ENCODE measurements at regions of chr6 and their contacts with region 1.

Region 1: DNA sequence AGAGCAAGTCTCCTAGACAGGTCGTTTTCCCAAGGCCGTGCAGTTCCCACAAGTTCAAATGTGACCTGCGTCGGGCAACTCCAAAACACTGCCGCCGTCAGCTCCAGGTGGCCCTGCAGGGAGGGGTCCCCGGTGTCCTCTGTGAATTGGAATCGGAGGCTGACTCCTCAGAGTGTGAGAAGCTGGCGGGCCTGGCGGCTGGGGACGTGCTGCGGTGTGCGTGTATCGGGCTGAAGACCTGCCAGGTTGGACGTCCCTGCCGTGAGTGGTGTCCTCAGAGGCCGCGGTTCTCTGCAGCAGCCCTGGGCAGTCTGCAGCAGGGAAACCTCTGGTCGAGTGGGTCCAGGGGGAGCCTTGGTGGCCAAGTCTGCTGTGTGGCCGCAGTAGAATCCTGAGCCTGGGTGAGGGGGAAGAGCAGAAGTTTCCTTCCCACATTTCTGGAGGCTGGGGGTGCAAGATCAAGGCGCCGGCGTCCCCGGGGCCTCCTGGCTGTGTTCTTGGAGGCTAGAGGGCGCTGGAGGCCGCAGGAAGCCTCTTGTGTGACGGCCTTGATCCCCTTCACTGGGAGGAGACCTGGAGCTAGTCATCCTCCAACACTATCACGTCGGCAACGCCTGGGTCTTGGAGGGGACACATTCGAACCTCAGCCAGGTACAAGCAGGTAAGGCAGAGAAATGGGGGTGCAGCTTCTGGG is 115.2 kb upstream of the FRMD1 start:
- DNase-seq: no peak
- H3K4me3 ChIP-seq: no peak overlapping the region
- H3K27ac ChIP-seq: no peak overlapping the region
- H3K4me1 ChIP-seq: no peaks in the 10 kb centered on the region
- H3K27me3 ChIP-seq: no peaks in the 10 kb centered on the region
- CTCF ChIP-seq: no peak

Region 2: DNA sequence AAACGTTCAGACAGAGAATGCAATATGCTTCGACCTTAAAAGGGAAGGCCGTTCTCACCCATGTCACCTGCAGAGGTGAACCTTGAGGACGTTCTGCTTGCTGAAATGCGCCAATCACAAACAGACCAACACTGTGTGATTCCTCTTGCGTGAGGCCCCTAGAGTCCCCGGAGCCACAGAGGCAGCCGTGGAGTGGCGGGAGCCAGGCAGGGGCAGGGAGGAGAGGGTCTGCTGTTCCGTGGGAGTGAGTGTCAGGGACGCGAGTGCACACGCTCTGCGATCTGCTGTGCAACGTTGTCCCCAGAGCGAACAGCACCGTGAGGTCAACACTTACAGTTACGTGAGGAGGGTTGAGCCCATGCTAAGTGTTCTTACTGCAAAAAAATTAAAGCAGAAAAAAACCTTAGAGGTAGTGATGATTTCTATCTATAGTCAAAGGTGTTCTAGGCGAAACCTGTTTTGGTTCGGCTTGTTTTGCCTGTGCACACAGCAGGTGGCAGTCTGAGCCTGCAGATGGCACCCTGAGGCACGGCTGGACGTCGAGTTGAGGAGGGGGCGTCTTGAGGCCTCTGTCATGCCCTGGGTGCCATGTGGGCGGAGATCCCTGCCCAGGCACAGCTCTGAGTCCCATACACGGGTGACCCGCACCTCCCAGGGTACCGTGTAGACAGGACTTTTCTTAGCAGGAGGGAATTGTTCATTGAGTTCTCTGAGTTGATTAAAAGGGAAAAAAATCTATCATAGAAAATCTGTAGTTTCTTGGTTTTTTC is 43.4 kb before region 1 on chr6:
- intact Hi-C with region 1: loop called (anchors 2 kb)
- DNase-seq: peak; percentile 53
- H3K4me3 ChIP-seq: no peak overlapping the region
- H3K27ac ChIP-seq: no peak overlapping the region
- H3K4me1 ChIP-seq: no peaks in the 10 kb centered on the region
- H3K27me3 ChIP-seq: no peaks in the 10 kb centered on the region
- CTCF ChIP-seq: peak; percentile 48

Region 3: GRCh38 chr6:168683621-168684020 is 489.4 kb after region 1 on chr6:
- intact Hi-C with region 1: no loop called
- DNase-seq: no peak
- H3K4me3 ChIP-seq: no peak overlapping the region
- H3K27ac ChIP-seq: no peak overlapping the region
- H3K4me1 ChIP-seq: no peaks in the 10 kb centered on the region
- H3K27me3 ChIP-seq: no peaks in the 10 kb centered on the region
- CTCF ChIP-seq: no peak